ENCODE measurements at regions of chr20 and their contacts with region 1.

Region 1: GRCh38 chr20:60034231-60035110 is 76.2 kb downstream of the CDH26 start:
- DNase-seq: peak; percentile 52 to 81
- ATAC-seq: peak; percentile 93 to 96
- H3K4me3 ChIP-seq: peak overlapping the region; percentile 8 to 35 (median 25)
- H3K27ac ChIP-seq: peak overlapping the region; percentile 72 to 93 (median 88)
- H3K4me1 ChIP-seq: peaks cover 27 to 33% of the 10 kb centered on the region in 2 donors
- H3K27me3 ChIP-seq: no peaks in the 10 kb centered on the region
- CTCF ChIP-seq: no peak
- POLR2A ChIP-seq: no peak

Region 2: DNA sequence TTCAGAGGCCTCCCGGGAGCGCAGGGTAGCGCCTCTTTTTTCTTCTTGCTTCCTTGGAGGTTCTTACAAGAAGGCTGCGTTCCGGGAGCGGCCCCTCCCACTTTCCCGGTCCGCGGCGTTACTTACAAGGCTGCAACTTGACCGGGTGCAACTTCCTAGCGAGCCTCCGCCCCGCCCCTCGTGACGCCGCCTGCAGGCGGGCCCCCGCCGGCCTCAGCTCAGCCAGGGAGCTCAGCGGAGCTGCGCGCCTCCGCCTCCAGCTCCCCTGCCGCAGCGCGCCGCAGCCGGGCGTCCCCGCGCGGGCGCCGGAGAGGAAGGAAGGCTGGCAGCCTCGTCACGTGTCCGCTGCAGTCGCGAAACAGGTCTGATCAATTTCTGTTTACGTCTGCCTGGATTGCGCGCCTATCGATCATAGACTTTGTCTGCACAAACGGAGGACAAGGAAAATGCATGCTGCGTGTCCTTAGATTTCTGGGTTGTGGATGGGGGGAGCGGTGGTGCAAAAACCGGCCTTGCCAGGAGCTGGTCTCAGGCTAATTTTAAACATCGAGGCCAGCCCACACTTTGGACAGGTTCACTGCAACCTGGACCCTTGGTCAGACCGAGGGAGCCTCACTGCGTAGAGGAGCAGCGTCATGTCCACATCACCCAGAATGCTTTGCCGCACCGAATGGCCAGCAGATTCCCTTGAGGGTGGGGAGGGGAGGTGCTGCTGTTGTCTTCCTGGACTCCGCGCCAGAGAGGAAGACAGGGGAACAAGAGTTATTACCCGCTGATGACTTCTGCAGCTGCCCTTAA is 94.1 kb before region 1 on chr20 and contains the starts of genes FAM217B and PPP1R3D:
- in situ Hi-C with region 1: no loop called
- intact Hi-C with region 1: loop called (anchors 5 kb)
- DNase-seq: peak; percentile 97 to 98
- ATAC-seq: peak; percentile 74 to 77
- H3K4me3 ChIP-seq: peak within 1 kb of the TSS; percentile 62 to 90 (median 74)
- H3K27ac ChIP-seq: peak within 1 kb of the TSS; percentile 91 to 99 (median 93)
- H3K4me1 ChIP-seq: peaks cover 58 to 65% of the 10 kb centered on the region in 2 donors
- H3K27me3 ChIP-seq: no peaks in the 10 kb centered on the region
- CTCF ChIP-seq: peak in 1 of 5 experiments; percentile 6
- POLR2A ChIP-seq: peak; percentile 82 to 90
- total RNA-seq, gene FAM217B: 2.8 to 6.9 (median 6.4) TPM
- total RNA-seq, gene PPP1R3D: 4.1 to 12.0 (median 10.8) TPM

Measured in gastrocnemius medialis (tissue), 4 donors.